Panc1 (cell line): ENCODE measurements at regions of chr14 and their contacts with region 1.

Region 1: DNA sequence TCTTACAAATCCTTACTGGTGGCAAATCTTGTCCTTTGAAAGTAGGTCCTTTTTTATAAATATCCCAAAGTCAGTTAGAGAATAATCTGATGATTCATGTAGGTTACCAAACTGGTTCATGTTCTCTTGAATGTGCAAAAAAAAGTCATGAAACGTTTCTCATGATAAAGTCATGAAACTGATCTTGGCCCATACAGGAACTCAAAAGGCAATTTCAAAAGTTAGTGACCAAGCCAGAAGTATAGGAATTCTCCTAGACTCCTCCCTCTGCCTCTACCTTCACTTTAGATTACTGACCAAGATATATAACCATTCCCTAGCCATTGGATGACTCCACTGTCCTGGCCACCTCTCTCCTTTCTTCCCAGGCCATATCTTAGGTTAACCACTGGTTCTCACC is 27.3 kb upstream of the SPTSSA start:
- DNase-seq: no peak
- ATAC-seq: no peak
- H3K4me3 ChIP-seq: no peak overlapping the region
- H3K27ac ChIP-seq: no peak overlapping the region
- H3K4me1 ChIP-seq: no peaks in the 10 kb centered on the region
- H3K27me3 ChIP-seq: no peaks in the 10 kb centered on the region
- CTCF ChIP-seq: no peak

Region 2: GRCh38 chr14:34359420-34360115 is 129.8 kb before region 1 on chr14:
- CTCF ChIA-PET with region 1: interaction called, 13 read pairs
- POLR2A ChIA-PET with region 1: no interaction called
- in situ Hi-C with region 1: no loop called
- intact Hi-C with region 1: no loop called
- DNase-seq: no peak
- ATAC-seq: no peak
- H3K4me3 ChIP-seq: no peak overlapping the region
- H3K27ac ChIP-seq: no peak overlapping the region
- H3K4me1 ChIP-seq: peaks cover 4% of the 10 kb centered on the region; the same call in 1 of the 2 replicates
- H3K27me3 ChIP-seq: no peaks in the 10 kb centered on the region
- CTCF ChIP-seq: no peak

Region 3: DNA sequence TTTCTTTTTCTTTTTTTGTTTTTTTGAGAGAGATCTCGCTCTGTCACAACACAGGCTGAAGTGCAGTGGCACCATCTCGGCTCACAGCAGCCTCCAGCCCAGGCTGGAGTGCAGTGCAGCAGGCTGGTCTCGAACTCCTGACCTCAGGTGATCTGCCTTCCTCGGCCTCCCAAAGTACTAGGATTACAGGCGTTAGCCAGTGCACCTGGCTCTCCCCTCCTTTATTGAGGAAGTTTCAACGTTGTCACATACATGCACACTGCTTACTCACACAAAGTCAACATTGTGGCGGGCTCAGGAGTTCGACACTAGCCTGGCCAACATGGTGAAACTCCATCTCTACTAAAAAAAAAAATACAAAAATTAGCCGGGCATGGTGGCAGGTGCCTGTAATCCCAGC is 18.1 kb after region 1 on chr14:
- CTCF ChIA-PET with region 1: interaction called, 11 read pairs
- POLR2A ChIA-PET with region 1: no interaction called
- in situ Hi-C with region 1: no loop called
- intact Hi-C with region 1: no loop called
- DNase-seq: no peak
- ATAC-seq: no peak
- H3K4me3 ChIP-seq: no peak overlapping the region
- H3K27ac ChIP-seq: no peak overlapping the region
- H3K4me1 ChIP-seq: no peaks in the 10 kb centered on the region
- H3K27me3 ChIP-seq: no peaks in the 10 kb centered on the region
- CTCF ChIP-seq: no peak